ENCODE measurements at regions of chr5 and their contacts with region 1.

Region 1: DNA sequence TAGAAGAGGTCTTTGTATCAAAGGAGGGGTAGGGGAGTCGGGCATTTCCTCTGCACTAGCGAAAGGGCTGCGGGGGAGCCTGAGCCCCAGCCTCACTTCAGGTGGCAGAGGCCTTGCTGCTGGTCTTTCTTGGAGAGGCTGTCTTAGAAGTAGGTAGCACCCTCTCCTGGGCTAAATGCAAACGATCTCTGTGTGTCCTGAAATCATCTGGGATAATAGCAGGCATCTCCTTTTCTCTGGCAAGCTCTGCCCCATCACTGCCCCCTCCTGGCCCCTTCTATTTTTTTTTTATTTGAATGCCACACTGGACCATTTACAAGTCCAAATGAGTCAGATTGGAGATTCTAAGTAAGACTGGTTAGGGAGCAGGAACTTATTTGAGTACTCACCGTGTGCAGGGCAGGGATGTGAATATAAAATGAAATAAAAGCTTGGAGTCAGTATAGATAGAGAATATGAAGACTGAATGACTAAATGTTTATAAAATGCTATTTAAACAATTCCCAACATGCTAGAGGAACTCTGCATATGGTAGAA is 137.1 kb downstream of the FGF1 start:
- DNase-seq: peak; percentile 97
- H3K4me3 ChIP-seq: no peak overlapping the region
- H3K27ac ChIP-seq: no peak overlapping the region
- H3K27me3 ChIP-seq: no peaks in the 10 kb centered on the region
- CTCF ChIP-seq: peak; percentile 89

Region 2: DNA sequence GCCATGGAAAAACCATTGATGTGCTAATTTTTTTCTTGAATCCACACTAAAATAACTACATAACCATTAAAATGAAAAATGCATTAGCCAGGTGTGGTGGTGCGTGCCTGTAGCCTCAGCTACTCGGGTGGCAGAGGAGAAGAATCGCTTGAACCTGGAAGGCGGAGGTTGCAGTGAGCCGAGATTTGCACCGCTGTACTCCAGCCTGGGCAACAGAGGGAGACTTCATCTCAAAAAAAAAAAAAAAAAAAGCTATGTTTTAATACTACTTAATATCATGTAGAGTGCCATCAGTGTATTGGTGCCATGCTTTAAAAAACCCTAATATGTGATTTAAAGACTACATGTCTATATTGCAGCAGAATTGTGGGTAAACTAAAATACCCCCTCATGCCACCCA is 381.3 kb before region 1 on chr5:
- in situ Hi-C with region 1: loop called (anchors 10 kb)
- DNase-seq: no peak
- H3K4me3 ChIP-seq: no peak overlapping the region
- H3K27ac ChIP-seq: no peak overlapping the region
- H3K27me3 ChIP-seq: no peaks in the 10 kb centered on the region
- CTCF ChIP-seq: peak; percentile 29

Region 3: GRCh38 chr5:142324871-142325724 is 223.7 kb before region 1 on chr5 and contains the start of gene SPRY4:
- in situ Hi-C with region 1: loop called (anchors 25 kb)
- DNase-seq: peak; percentile 98
- H3K4me3 ChIP-seq: peak within 1 kb of the TSS; percentile 98
- H3K27ac ChIP-seq: peak within 1 kb of the TSS; percentile 88
- H3K27me3 ChIP-seq: no peaks in the 10 kb centered on the region
- CTCF ChIP-seq: no peak

Measured in brain microvascular endothelial cell (primary cell).